Activated CD4-positive, alpha-beta memory T cell treated with anti-CD3 and anti-CD28 coated beads for 36 hours (primary cell): ENCODE measurements at regions of chr11 and their contacts with region 1.

Region 1: GRCh38 chr11:90204832-90205646 is 17.8 kb downstream of the CHORDC1 start:
- DNase-seq: no peak
- H3K4me3 Mint-ChIP-seq: no peak overlapping the region
- H3K27ac Mint-ChIP-seq: peak overlapping the region; percentile 38
- H3K4me1 Mint-ChIP-seq: peaks cover 16% of the 10 kb centered on the region
- H3K27me3 Mint-ChIP-seq: no peaks in the 10 kb centered on the region

Region 2: DNA sequence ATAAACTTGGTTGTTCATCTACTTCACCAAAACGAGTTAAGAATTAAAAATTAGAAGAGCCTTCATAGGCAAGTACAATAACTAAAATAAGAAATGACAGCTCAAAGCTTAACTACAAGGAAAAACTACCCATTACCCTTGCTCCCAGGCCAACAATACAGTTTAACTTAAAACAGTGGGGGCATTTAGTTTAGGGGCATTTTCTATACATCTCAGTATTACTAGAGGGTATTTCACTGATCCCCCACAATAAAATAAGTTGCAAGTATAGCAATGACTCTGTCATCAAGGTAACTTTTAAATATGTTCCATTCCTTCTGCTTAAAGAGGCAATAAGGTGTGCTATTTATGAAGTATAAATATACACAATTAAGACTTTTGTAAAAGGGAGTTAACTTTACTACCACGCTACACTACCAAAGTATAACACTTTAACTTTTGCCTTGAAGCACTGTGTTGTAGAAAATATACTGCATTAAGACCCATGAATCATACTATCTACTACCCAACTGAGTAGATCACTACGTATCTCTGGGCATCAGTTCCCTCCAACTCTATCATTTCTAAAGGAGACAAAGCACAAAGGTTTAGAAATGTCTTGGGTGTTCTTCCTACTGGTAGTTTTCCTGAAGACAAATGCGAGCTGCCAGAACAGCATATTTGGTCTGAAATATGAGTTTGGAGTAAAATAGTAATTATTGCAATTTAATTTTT is 12.0 kb before region 1 on chr11:
- CTCF ChIA-PET with region 1: interaction called, 12 read pairs
- POLR2A ChIA-PET with region 1: no interaction called
- intact Hi-C with region 1: no loop called
- DNase-seq: no peak
- H3K4me3 Mint-ChIP-seq: no peak overlapping the region
- H3K27ac Mint-ChIP-seq: no peak overlapping the region
- H3K4me1 Mint-ChIP-seq: no peaks in the 10 kb centered on the region
- H3K27me3 Mint-ChIP-seq: no peaks in the 10 kb centered on the region

Region 3: DNA sequence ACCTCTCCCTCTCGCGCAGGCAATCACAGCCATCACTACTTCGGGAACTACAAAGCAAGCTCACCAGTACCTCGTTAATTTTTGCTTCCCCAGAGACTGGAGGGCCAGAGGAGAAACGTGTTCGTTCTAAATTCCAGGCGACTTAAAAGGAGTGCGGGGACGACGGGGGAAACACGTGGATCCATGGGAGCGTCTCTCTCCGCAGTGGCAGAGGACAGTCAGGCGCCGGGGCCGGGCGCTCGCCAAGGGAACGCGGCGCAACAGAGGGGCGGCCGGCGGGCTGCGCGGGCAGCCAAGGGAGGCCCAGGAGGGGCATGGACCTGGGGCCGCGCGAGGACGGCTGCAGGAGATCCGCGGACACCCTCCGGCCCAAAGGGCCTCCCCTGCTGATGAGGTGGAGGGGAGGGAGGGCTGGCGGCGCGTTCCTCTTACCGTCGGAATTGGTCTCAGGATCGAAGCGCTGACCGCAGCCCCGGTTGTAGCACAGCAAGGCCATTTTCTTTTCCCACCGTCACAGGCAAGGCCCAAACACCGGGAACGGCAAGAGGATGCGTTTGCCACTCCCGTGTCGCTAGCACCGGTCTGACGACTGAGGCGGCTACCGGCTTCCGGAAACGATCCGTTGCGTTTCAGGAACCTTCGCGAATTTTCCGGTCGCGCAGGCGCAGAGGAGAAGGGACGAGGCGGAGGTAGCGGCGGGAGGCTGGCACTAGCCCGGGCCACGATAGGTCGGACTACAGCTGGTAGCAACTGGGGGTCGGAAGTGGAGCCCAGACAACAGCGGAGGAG is 17.6 kb after region 1 on chr11 and contains the start of gene CHORDC1:
- CTCF ChIA-PET with region 1: interaction called, 16 read pairs
- POLR2A ChIA-PET with region 1: interaction called, 3 read pairs
- intact Hi-C with region 1: loop called (anchors 2 kb)
- DNase-seq: peak; percentile 97
- H3K4me3 Mint-ChIP-seq: peak within 1 kb of the TSS; percentile 98
- H3K27ac Mint-ChIP-seq: peak within 1 kb of the TSS; percentile 93
- H3K4me1 Mint-ChIP-seq: peaks cover 42% of the 10 kb centered on the region
- H3K27me3 Mint-ChIP-seq: no peaks in the 10 kb centered on the region
- total RNA-seq, gene CHORDC1: 62.6 to 71.0 TPM

Region 4: DNA sequence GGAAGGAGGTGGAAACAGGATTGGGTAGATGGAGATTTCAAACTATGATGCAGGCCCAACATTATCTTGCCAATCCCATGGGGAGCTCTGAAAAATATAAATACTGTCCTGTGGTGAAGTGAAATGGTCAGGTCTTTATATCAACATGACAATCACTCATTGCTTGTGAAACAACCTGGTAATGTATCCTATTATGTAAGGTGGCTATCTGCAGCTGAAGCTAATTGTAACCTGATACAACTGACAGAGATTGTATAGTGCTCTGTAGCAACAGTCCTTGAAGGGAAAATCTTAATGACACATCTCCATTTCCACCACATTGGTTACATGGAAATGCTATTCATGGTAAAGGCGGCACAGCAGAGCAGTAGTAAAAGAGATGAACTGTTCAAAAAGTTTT is 38.5 kb after region 1 on chr11:
- CTCF ChIA-PET with region 1: no interaction called
- POLR2A ChIA-PET with region 1: no interaction called
- intact Hi-C with region 1: loop called (anchors 5 kb)
- DNase-seq: no peak
- H3K4me3 Mint-ChIP-seq: no peak overlapping the region
- H3K27ac Mint-ChIP-seq: no peak overlapping the region
- H3K4me1 Mint-ChIP-seq: peaks cover 20% of the 10 kb centered on the region
- H3K27me3 Mint-ChIP-seq: peaks cover 9% of the 10 kb centered on the region

Region 5: DNA sequence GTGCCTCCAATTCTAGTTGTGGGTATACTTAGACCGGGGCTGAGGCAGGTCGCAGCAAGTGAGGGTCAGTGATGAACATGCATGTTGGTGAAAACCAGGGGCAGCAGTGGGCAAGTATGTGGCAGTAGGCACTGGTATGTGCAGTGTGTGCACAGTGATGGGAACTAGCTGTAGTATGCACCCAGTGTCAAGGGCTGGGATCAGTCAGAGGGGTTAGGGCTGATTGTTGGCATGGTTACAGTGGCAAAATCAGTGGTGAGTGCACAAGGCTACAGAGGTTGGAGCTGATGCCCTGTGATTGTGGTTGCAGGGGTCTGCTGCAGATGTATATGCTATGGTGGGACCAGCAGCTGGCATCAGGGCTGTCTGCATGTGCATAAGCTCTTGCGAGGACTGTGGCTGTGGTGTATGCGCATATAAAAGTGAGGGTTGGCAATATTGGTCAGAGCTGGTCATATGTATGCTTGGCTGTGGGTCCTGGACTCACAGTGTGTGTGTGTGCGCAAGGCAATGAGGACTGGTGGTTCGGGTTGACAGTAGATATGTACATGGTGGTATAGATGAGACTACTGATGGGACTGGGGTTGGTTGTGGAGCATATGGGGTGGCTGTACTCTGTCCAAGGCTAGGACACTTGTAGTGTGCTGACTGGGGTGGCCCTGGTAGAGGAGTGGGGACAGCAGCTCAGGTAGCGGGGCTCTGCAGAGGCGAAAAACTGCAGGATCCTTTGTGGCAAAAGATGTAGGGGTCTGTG is 51.5 kb after region 1 on chr11:
- CTCF ChIA-PET with region 1: no interaction called
- POLR2A ChIA-PET with region 1: no interaction called
- intact Hi-C with region 1: no loop called
- DNase-seq: no peak
- H3K4me3 Mint-ChIP-seq: no peak overlapping the region
- H3K27ac Mint-ChIP-seq: no peak overlapping the region
- H3K4me1 Mint-ChIP-seq: peaks cover 6% of the 10 kb centered on the region
- H3K27me3 Mint-ChIP-seq: no peaks in the 10 kb centered on the region

Region 6: DNA sequence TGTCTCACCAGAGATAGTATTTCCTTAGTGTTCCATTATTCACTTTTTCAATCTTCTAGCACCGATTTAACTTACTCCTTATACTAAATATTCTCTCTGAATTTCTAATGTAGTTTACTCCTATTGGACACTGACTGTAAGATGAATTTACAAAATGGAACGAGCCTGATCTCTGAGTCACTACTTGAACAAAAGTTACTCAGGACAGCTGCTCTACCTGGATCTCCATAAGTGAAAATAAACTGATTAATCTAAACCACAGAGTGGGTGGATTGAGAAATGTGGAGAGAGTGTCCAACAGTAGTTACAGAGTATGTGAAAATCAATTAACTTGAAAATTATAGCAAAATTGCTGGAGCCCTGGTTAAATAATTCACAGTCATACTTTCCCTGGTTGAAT is 159.5 kb after region 1 on chr11:
- CTCF ChIA-PET with region 1: no interaction called
- POLR2A ChIA-PET with region 1: no interaction called
- intact Hi-C with region 1: no loop called
- DNase-seq: no peak
- H3K4me3 Mint-ChIP-seq: no peak overlapping the region
- H3K27ac Mint-ChIP-seq: no peak overlapping the region
- H3K4me1 Mint-ChIP-seq: no peaks in the 10 kb centered on the region
- H3K27me3 Mint-ChIP-seq: no peaks in the 10 kb centered on the region

Region 7: DNA sequence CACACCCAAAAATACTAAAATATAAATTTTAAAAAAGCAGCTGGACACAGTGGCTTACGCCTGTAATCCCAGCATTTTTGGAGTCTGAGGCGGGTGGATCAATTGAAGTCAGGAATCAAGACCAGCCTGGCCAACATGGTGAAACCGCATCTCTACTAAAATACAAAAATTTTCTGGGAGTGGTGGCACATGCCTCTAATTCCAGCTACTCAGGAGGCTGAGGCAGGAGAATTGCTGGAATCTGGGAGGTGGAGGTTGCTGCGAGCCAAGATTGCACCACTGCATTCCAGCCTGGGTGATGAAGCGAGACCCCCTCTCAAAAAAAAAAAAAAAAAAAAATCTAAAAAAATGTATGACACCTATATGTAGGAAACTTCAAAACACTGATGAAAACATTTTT is 260.5 kb after region 1 on chr11:
- CTCF ChIA-PET with region 1: interaction called, 9 read pairs
- POLR2A ChIA-PET with region 1: no interaction called
- intact Hi-C with region 1: loop called (anchors 2 kb)
- DNase-seq: no peak
- H3K4me3 Mint-ChIP-seq: no peak overlapping the region
- H3K27ac Mint-ChIP-seq: no peak overlapping the region
- H3K4me1 Mint-ChIP-seq: no peaks in the 10 kb centered on the region
- H3K27me3 Mint-ChIP-seq: peaks cover 2% of the 10 kb centered on the region

Region 8: GRCh38 chr11:90614318-90614717 is 409.3 kb after region 1 on chr11:
- CTCF ChIA-PET with region 1: no interaction called
- POLR2A ChIA-PET with region 1: no interaction called
- intact Hi-C with region 1: no loop called
- DNase-seq: no peak
- H3K4me3 Mint-ChIP-seq: no peak overlapping the region
- H3K27ac Mint-ChIP-seq: no peak overlapping the region
- H3K4me1 Mint-ChIP-seq: no peaks in the 10 kb centered on the region
- H3K27me3 Mint-ChIP-seq: no peaks in the 10 kb centered on the region